IMR-90 (cell line): ENCODE measurements at regions of chr1 and their contacts with region 1.

Region 1: DNA sequence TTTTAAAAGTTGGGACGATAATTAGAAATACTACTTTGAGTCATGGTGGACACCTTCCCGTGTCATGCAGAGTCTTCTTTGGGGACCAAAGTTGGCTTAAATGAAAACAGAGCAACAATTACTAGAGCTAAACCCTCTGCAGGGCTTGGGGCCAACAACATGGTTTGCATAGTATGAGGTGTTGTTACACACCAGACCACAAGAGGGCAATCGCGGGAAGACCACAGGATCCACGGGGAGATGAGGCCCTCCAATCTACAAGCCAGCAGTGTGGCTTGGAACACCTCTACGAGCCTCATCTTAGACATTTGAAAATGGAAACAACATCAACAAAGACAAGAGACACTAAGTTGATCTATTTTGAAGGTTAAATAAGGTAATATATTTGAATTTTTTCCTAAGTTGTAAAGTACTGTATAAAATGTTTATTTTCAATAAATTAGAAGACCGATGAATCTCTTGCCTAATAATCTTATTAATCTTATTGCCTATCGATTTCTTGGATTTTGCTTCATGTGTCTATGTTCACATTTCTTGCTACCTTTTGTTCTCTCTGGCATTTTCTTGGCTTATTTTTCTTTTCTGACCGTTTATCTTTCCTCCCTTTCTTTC is 8.2 kb upstream of the SMCP start:
- DNase-seq: peak; percentile 51
- ATAC-seq: peak; percentile 90
- H3K4me3 ChIP-seq: no peak overlapping the region
- H3K27ac ChIP-seq: no peak overlapping the region
- H3K4me1 ChIP-seq: no peaks in the 10 kb centered on the region
- H3K27me3 ChIP-seq: no peaks in the 10 kb centered on the region
- CTCF ChIP-seq: peak; percentile 67
- POLR2A ChIP-seq: no peak
- RAD21 ChIP-seq: peak; percentile 55

Region 2: DNA sequence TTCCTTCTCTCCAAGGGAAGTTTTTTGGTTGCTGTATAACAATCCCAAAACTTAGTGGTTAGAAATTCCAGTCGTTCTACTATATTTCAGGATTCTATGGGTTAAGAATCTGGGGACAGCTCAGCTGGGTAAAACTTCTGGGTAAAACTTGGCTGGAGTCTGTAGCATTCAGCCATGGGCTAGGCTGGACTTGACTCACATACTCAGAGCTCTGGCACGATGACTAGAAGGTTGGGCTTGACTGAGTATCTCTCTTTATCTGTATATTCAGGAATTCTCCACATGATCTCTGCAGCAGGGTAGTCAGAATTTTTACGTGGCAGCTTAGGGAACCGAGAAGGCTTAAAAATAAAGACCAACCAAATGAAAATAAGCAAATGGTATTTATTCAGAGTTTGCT is 617.8 kb before region 1 on chr1:
- CTCF ChIA-PET with region 1: no interaction called
- POLR2A ChIA-PET with region 1: no interaction called
- dilution Hi-C with region 1: no loop called
- in situ Hi-C with region 1: no loop called
- intact Hi-C with region 1: no loop called
- DNase-seq: no peak
- ATAC-seq: no peak
- H3K4me3 ChIP-seq: no peak overlapping the region
- H3K27ac ChIP-seq: no peak overlapping the region
- H3K4me1 ChIP-seq: no peaks in the 10 kb centered on the region
- H3K27me3 ChIP-seq: no peaks in the 10 kb centered on the region
- CTCF ChIP-seq: no peak
- POLR2A ChIP-seq: no peak
- RAD21 ChIP-seq: no peak

Region 3: GRCh38 chr1:152582647-152583046 is 287.3 kb before region 1 on chr1:
- CTCF ChIA-PET with region 1: no interaction called
- POLR2A ChIA-PET with region 1: no interaction called
- dilution Hi-C with region 1: no loop called
- in situ Hi-C with region 1: no loop called
- intact Hi-C with region 1: no loop called
- DNase-seq: peak; percentile 0
- ATAC-seq: no peak
- H3K4me3 ChIP-seq: no peak overlapping the region
- H3K27ac ChIP-seq: no peak overlapping the region
- H3K4me1 ChIP-seq: no peaks in the 10 kb centered on the region
- H3K27me3 ChIP-seq: no peaks in the 10 kb centered on the region
- CTCF ChIP-seq: no peak
- POLR2A ChIP-seq: no peak
- RAD21 ChIP-seq: no peak

Region 4: DNA sequence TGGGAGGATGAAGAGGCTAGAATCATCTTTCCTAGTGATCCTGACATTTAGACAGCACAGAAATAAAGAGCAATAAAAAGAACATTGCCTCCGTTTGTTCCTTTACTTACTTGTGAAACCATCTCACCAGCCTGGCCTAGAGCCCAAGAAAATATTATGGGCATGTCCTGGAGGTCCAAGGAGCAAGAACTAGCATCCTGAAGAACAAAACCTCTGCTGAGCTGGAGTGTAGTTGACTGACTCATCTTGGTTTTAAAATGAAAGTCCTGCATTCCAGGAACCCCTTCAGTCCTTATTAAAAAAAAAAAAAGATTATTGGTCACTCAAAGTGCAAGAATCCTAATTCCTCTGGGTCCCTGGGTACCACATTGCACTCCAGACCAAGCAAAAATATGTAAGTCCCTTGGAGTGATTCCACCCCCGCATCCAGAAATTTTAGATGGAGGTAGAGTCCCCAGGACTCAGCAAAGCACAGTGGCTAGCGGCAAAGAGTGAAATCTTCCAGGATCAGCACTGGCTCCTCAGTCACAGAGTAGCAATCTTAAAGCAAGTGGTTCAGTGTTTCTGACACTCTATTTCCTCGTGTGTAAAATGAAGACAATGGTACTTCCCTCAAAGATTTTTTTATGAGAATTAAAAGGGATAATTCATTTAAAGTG is 15.2 kb after region 1 on chr1:
- CTCF ChIA-PET with region 1: no interaction called
- POLR2A ChIA-PET with region 1: no interaction called
- dilution Hi-C with region 1: no loop called
- in situ Hi-C with region 1: no loop called
- intact Hi-C with region 1: no loop called
- DNase-seq: no peak
- ATAC-seq: no peak
- H3K4me3 ChIP-seq: no peak overlapping the region
- H3K27ac ChIP-seq: no peak overlapping the region
- H3K4me1 ChIP-seq: no peaks in the 10 kb centered on the region
- H3K27me3 ChIP-seq: no peaks in the 10 kb centered on the region
- CTCF ChIP-seq: no peak
- POLR2A ChIP-seq: no peak
- RAD21 ChIP-seq: no peak

Region 5: DNA sequence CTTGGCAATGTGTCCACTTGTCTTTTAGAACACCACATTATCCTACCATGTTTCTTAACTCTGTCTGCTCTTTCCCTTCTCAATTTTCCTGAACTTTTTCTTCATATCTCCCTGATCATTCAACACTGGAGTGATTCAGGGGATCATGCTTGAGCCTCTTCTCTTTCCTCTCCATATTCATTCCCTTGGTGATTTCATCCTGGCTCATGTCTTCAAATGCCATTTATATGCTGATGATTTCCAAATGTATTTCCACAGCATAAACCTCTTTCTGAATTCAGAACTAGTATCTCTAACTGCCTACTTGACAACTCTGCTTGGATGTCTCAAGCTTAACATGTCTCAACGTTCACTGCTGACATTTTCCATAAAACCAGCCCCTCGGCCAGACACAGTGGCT is 30.0 kb after region 1 on chr1:
- CTCF ChIA-PET with region 1: no interaction called
- POLR2A ChIA-PET with region 1: no interaction called
- dilution Hi-C with region 1: no loop called
- in situ Hi-C with region 1: no loop called
- intact Hi-C with region 1: no loop called
- DNase-seq: no peak
- ATAC-seq: no peak
- H3K4me3 ChIP-seq: no peak overlapping the region
- H3K27ac ChIP-seq: no peak overlapping the region
- H3K4me1 ChIP-seq: no peaks in the 10 kb centered on the region
- H3K27me3 ChIP-seq: no peaks in the 10 kb centered on the region
- CTCF ChIP-seq: no peak
- POLR2A ChIP-seq: no peak
- RAD21 ChIP-seq: no peak

Region 6: DNA sequence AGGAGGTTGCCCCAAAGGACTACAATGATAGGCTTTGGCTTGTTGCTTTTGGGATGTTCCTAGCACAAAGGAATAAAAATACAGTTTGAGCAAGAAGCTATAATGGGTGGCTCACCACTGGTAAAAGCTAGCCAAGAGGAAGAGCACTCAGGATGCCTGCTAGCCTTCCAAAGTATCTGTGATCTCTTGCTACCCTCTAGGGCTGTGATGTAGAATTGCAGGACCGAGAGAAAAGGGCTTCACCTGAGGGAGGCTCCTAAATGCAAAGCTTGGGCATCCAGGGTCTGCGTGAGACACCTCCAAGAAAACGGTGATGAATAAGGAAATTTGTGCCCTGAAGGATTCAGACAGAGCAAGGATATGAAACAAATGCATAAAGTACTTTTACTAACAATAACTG is 56.2 kb after region 1 on chr1:
- CTCF ChIA-PET with region 1: no interaction called
- POLR2A ChIA-PET with region 1: no interaction called
- dilution Hi-C with region 1: no loop called
- in situ Hi-C with region 1: no loop called
- intact Hi-C with region 1: loop called (anchors 1 kb)
- DNase-seq: peak; percentile 5
- ATAC-seq: peak; percentile 37
- H3K4me3 ChIP-seq: no peak overlapping the region
- H3K27ac ChIP-seq: no peak overlapping the region
- H3K4me1 ChIP-seq: no peaks in the 10 kb centered on the region
- H3K27me3 ChIP-seq: no peaks in the 10 kb centered on the region
- CTCF ChIP-seq: peak; percentile 51
- POLR2A ChIP-seq: no peak
- RAD21 ChIP-seq: peak; percentile 57

Region 7: DNA sequence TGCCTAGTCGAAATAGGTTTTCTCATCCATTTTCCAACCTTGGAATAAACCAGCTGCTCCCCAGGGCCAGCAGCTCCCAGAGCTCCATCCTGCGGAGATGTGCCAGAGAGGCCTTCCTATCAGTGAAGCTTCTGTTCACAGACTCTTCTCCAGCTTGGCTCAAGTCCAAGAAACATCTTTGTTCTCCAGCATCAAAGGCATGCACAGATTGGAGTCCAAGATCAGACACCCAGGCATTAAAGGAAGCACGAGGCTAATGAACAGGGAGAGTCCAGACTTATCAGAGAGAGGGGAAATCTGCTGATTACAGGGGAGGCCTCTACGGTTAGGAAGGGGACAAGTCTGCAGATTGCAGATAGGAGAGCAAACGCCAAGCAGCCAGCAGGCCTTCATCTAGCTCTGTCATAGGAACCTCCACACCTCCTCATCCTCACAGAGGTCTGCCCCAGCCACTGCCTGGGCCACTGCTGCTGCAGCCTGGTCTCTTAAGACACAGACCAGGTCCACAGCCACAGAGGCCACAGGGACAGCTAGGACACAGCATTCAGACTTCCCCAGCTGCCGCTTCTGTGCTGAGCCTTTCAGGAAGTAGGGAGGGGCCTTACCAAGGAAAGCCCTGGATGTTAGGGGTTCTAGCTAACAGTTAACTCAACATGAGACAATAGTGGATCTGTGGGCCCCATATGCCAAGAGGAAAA is 350.8 kb after region 1 on chr1:
- CTCF ChIA-PET with region 1: no interaction called
- POLR2A ChIA-PET with region 1: no interaction called
- dilution Hi-C with region 1: no loop called
- in situ Hi-C with region 1: loop called (anchors 5 kb)
- intact Hi-C with region 1: loop called (anchors 1 kb)
- DNase-seq: no peak
- ATAC-seq: no peak
- H3K4me3 ChIP-seq: no peak overlapping the region
- H3K27ac ChIP-seq: no peak overlapping the region
- H3K4me1 ChIP-seq: no peaks in the 10 kb centered on the region
- H3K27me3 ChIP-seq: no peaks in the 10 kb centered on the region; the same call in 1 of the 2 replicates
- CTCF ChIP-seq: no peak
- POLR2A ChIP-seq: no peak
- RAD21 ChIP-seq: no peak

Region 8: DNA sequence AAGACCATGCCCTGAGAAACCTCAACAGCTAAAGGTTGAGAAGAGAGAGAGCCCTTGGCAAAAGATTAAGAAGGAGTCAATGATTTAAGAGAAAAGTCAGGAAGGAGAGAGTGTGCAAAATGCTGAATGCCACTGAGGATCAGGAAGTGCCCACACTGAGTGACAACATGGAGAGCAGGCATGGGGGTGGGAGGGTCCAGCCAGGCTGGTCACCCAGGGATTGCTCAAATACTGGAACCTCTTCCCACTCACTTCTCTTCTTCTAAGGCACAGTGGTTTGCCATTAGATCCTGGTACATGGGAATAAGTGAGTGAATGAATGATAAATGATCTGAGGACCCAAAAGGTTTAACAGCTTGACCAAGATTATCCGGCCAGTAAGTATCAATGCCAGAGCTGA is 358.6 kb after region 1 on chr1:
- CTCF ChIA-PET with region 1: no interaction called
- POLR2A ChIA-PET with region 1: no interaction called
- dilution Hi-C with region 1: no loop called
- in situ Hi-C with region 1: loop called (anchors 5 kb)
- intact Hi-C with region 1: loop called (anchors 1 kb)
- DNase-seq: no peak
- ATAC-seq: no peak
- H3K4me3 ChIP-seq: no peak overlapping the region
- H3K27ac ChIP-seq: no peak overlapping the region
- H3K4me1 ChIP-seq: no peaks in the 10 kb centered on the region
- H3K27me3 ChIP-seq: no peaks in the 10 kb centered on the region
- CTCF ChIP-seq: no peak
- POLR2A ChIP-seq: no peak
- RAD21 ChIP-seq: no peak